ENCODE measurements at regions of chr22 and their contacts with region 1.

Region 1: GRCh38 chr22:36433318-36434231 is 45.8 kb upstream of the MYH9 start:
- DNase-seq: peak; percentile 78

Region 2: DNA sequence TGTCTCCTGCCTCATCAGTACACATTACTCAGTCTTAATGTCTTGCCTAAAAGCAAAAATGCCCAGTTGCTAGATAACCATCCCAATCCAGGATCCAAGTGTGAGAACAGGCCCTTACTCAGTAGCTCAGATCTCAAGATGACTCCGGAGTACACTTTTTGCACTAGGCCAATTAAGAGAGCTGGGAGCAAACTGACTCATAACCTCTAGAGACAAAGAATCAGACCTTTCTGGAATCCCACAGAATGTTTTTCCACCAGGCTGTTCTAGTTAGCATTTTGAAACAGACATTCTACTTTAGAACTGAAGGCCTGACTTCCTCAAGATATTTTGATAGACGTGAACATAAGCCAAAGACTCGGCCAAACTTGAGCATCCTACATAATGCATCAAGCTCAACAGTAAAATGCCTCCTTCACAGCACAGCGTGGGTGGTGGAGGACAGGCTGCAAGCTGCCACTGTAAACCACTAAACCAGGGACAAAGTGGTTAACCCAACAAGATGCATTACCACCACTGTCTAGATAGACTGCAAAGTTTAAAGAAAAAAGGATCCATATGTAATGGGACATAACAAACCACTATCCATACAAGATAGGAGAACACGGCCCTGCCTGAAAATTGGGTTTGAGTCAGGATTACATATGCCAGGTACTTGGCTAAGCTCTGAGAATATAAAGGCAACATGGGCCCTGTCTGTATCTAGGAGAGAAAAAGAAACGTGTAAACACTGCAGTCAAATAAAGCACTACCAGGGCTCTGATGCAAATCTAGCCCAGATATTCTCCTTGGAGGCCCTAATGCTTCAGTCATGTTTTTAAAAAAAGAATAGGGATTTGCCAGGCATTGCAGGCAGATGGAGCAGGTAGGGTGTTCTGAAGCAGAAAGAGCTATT is 94.2 kb before region 1 on chr22:
- in situ Hi-C with region 1: loop called (anchors 5 kb)
- DNase-seq: no peak

Region 3: DNA sequence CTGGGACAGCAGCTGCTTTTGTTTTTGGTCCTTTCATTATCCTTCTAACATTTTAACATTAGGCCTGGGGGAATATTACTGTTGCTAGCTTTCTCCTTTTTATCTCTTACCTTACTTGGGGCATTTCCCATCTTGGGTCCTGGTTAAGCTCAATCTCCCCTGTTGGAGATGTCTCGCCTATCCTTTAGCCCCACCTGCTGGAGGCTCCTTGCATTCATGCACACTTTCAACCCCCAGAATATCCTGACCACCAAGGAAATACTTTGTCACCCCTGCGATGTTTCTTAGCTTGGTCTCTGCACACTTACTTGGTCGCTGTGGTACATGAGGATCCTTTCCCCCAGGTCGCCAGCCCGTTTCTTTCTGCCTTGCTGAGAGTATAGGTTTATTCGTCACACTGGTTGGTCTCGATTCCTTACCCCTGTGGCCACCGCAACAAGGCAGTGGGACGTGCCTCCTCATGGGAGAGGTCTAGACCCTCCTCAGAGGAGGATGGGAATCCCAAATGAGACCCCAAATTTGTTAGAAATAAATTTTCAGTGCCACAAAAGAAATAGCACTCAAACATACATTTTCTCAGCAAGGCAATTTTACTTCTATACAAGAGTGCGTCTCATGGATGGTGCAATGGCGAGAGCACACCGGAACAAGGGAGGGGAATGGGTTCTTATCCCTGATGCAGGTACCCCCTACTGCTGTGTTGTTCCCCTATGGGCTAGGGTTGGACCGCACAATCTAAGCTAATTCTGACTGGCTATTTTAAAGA is 53.2 kb after region 1 on chr22:
- in situ Hi-C with region 1: no loop called
- DNase-seq: no peak

Measured in G401 (cell line).